Posterior vena cava (tissue), 2 donors: ENCODE measurements at regions of chr19 and their contacts with region 1.

Region 1: GRCh38 chr19:21824679-21825078 is 11.3 kb downstream of the ZNF43 start:
- DNase-seq: no peak

Region 2: DNA sequence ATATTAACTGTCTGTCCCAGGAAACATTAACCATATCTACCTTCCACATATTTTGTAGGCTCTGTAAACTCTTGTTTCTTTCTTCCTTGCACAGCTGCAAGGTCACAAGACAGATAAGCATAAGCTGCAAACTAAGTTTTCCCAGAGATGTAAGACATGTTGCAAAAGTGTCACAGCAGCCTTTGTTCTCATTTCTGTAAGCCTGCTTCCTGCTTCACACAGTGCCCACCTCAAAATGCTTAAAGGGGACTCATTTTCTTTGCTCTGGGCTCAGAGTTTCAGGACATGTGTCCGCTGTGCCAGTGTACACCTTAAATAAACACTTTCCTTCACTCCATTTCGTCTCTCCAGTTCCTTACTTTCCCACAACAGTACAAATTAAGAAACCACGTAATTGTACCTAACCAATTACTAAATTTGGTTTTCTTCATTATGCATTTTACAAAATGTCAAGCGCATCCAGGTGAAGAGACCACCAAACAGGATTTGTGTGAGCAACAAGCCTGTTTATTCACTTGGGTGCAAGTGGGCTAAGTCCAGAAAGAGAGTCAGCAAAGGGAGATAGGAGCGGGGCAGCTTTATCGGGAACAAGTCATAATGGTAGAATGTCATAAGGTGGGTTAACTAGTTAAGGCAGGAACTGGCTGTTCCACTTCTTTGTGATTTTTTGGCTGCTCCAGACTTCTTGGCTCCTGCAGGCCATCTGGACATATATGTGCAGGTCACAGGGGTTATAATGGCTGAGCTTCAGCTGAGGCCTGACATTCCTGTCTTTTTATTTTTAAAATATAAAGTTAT is 695.6 kb before region 1 on chr19:
- intact Hi-C with region 1: loop called in 1 of 2 experiments (anchors 5 kb)
- DNase-seq: no peak

Region 3: GRCh38 chr19:21586311-21587116 is 238.2 kb before region 1 on chr19:
- intact Hi-C with region 1: no loop called
- DNase-seq: no peak

Region 4: GRCh38 chr19:21891081-21891480 is 66.4 kb after region 1 on chr19:
- intact Hi-C with region 1: no loop called
- DNase-seq: no peak